HepG2 (cell line): ENCODE measurements at regions of chr6 and their contacts with region 1.

Region 1: DNA sequence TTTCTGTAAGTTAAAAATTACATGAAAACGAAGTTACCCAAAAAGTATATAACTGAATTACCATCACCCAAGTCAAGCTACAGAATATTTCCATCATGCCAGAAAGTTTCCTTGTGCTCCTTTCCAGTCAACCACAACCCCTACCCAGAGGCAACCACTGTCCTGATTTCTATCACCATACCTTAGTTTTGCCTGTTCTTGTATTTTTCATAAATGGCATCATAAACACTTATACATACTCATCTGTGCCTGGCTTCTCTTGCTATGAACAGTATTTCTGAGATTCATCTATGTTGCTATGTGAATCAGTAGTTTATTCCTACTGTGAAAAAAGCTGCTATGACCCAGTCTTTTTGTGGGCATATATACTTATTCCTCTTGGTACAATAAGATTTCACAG is 7.4 kb downstream of the FKBP5 start:
- DNase-seq: no peak
- ATAC-seq: no peak
- H3K4me3 ChIP-seq: no peak overlapping the region
- H3K27ac ChIP-seq: no peak overlapping the region
- H3K4me1 ChIP-seq: peaks cover under 1% of the 10 kb centered on the region
- H3K27me3 ChIP-seq: no peaks in the 10 kb centered on the region
- CTCF ChIP-seq: no peak
- EP300 ChIP-seq: no peak
- POLR2A ChIP-seq: no peak
- RAD21 ChIP-seq: no peak

Region 2: GRCh38 chr6:35601331-35602132 is 79.8 kb before region 1 on chr6:
- CTCF ChIA-PET with region 1: no interaction called
- POLR2A ChIA-PET with region 1: interaction called, 3 read pairs
- in situ Hi-C with region 1: no loop called
- intact Hi-C with region 1: loop called (anchors 5 kb)
- DNase-seq: peak; percentile 63
- ATAC-seq: peak; percentile 59
- H3K4me3 ChIP-seq: peak overlapping the region; percentile 14 to 27 (median 23); a peak in 5 of 6 replicates
- H3K27ac ChIP-seq: peak overlapping the region; percentile 83
- H3K4me1 ChIP-seq: peaks cover 40% of the 10 kb centered on the region
- H3K27me3 ChIP-seq: no peaks in the 10 kb centered on the region
- CTCF ChIP-seq: no peak
- EP300 ChIP-seq: peak in 1 of 2 experiments; percentile 62; a peak in 1 of 4 replicates
- POLR2A ChIP-seq: no peak
- RAD21 ChIP-seq: no peak